Right ventricle myocardium inferior (tissue), 1 donor: ENCODE measurements at regions of chr9 and their contacts with region 1.

Region 1: DNA sequence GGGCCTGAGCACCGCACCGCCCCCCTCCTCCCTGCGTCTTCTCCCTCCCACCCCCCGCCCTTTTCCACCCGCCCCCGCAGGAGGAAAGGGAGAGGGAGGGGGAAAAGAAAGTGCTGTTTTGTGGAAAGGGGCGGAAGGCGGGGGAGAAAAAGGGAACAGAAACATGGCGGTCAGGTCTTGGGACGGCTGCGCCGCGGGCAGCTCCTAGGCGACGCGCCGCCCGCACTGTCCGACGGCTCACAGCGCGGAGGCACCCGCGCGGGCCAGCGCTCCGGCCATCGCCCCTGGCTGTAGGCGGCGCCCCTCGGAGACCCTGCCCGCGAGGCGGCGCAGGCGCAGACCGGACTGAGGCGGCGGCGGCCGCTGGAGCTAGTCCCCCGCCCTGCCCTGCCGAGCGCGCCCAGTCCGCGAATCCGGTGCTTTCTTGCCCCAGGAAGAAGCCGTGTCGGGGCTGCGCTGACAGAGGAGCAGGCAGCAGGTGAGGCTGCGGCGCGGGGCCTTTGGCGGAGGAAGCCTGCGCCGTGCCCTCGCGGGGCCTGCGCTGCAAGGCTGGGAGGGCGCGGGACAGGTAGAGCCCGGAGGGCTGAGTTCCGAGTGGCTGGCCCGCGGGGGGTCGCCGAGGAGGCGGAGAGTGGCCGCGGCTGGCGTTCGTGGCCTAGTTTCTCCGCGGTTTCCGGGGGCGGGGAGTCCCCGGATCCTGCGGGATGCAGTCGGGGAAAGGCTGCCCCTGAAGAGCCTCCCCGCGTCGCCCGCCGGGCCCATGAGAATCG is at the start of gene DENND4C:
- DNase-seq: peak; percentile 92
- ATAC-seq: peak; percentile 95
- total RNA-seq, gene DENND4C: 22.0 TPM

Region 2: DNA sequence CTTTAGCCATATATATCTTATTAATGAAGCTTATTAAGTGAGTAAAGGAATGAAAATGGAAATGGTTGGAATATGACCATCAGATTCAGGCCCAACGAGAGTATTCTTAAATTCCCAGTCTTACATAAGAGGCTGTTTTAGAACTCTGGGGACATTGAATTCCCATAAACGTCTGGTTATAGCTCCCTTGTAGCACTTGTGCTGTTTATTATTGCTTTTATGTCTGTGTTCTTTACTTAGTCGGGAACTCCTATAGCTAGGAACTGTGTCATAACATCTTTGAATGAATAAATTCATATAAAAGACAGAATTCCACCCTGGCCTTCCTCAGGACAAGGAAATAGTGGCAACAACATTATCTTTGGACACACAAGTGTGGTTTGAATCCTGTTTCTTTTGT is 1593.3 kb before region 1 on chr9:
- intact Hi-C with region 1: no loop called
- DNase-seq: no peak
- ATAC-seq: no peak

Region 3: DNA sequence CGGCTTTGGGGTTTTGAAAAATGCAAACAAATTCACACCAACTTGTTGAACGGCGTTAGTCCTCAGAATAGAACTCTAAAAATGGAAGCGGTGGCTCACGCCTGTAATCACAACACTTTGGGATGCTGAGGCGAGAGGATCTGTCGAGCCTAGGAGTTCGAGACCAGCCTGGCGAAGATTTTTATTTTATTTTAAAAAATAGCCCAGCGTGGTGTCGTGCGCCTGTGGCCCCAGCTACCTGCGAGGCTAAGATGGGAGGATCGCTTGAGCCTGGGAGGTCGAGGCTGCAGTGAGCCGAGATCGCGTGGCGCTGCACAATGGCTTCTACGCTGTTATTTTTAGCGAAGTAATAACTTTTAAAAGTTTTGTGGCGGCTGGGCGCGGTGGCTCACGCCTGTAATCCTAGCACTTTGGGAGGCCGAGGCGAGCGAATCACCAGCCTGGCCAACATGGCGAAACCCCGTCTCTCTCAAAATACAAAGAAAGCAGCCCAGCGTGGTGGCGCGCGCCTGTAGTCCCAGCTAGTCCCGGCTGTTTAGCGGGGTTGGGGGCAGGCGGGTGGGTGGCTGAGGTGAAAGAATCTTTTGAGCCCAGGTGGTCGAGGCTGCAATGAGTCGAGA is 102.5 kb before region 1 on chr9:
- intact Hi-C with region 1: loop called (anchors 2 kb)
- DNase-seq: peak; percentile 77
- ATAC-seq: peak; percentile 11

Region 4: GRCh38 chr9:19138084-19138483 is 92.5 kb before region 1 on chr9:
- intact Hi-C with region 1: no loop called
- DNase-seq: no peak
- ATAC-seq: no peak

Region 5: GRCh38 chr9:19184144-19184917 is 46.2 kb before region 1 on chr9:
- intact Hi-C with region 1: loop called (anchors 5 kb)
- DNase-seq: peak; percentile 77
- ATAC-seq: peak; percentile 90

Region 6: GRCh38 chr9:19255821-19256220 is 25.3 kb after region 1 on chr9:
- intact Hi-C with region 1: no loop called
- DNase-seq: no peak
- ATAC-seq: no peak

Region 7: GRCh38 chr9:19294219-19294618 is 63.7 kb after region 1 on chr9:
- intact Hi-C with region 1: loop called (anchors 5 kb)
- DNase-seq: no peak
- ATAC-seq: peak; percentile 74

Region 8: DNA sequence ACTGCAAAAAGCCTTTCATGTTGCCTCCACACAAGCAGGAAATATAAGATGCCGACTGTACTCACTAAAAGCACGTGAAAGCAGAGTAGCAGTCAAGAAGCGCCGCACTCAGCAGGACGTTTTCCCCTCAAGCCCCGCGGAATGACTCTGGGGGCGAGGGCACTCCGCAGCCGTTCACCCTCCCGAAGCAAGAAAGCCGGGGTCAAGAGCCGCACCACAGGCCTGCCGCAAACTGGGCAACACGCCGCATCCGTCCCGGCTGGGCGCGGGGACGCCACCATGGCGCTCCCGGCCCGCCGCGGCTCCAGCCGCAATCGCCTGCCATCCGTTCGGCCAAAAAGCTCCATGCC is 149.1 kb after region 1 on chr9:
- intact Hi-C with region 1: loop called (anchors 10 kb)
- DNase-seq: peak; percentile 75
- ATAC-seq: peak; percentile 47